Calu3 (cell line): ENCODE measurements at regions of chr5 and their contacts with region 1.

Region 1: DNA sequence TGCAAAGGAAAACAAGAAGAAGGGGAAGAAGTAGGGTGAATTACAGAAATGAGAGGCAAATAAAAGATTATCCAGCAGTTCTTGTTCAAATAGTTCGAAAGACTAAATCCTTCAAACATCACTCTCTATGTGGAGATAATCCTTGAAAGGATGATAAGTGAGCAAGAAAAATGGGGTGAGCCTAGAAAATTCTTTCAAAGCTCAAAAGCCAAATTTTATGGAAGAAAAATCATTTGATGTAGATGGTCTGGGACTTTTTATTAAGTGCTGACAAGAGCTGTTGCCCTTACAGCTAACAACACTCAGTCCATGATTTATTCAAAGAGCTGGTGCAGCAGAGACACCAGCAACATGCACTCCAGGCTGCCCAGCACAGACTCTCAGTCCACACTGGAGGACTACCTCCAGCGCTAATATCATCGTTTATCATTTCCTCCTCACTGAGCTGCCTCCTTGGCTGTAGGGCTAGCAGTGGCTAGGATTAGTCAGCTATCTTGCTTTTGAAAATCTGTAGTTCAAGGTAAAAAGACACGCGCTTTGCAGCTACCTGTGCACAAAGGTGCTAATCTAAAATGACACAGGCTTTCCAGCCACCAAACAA is 264.8 kb upstream of the KIF2A start:
- DNase-seq: no peak
- H3K4me3 Mint-ChIP-seq: no peak overlapping the region
- H3K27ac Mint-ChIP-seq: no peak overlapping the region
- H3K4me1 Mint-ChIP-seq: no peaks in the 10 kb centered on the region
- H3K27me3 Mint-ChIP-seq: peaks cover 59% of the 10 kb centered on the region
- CTCF ChIP-seq: no peak

Region 2: DNA sequence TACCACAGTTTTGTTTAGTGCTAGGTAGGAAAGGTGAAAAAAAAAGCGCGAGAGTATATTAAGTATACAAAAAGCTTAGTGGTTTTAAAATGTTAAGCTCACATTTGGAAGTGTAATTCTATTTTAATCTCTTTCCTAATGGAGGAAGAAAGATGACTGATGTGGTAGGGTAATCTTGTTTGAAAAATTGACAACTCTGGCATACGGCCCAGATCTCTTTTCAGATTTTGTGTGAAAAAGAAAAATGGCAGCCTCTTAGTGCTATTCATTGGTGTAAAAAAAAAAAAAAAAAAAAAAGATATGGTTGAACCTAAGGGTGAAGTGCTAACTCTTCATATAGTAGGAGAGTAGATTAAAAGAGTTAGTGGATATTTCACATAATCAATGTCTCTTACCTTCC is 601.2 kb before region 1 on chr5:
- CTCF ChIA-PET with region 1: interaction called, 17 read pairs
- intact Hi-C with region 1: no loop called
- DNase-seq: no peak
- H3K4me3 Mint-ChIP-seq: no peak overlapping the region
- H3K27ac Mint-ChIP-seq: no peak overlapping the region
- H3K4me1 Mint-ChIP-seq: no peaks in the 10 kb centered on the region
- H3K27me3 Mint-ChIP-seq: no peaks in the 10 kb centered on the region
- CTCF ChIP-seq: no peak